Caco-2 (cell line): ENCODE measurements at regions of chr1 and their contacts with region 1.

Region 1: GRCh38 chr1:214349781-214350180 is 68.8 kb downstream of the SMYD2 start:
- DNase-seq: peak; percentile 82 to 88
- H3K4me3 ChIP-seq: no peak overlapping the region
- H3K4me3 Mint-ChIP-seq: peak overlapping the region; percentile 70
- H3K27ac Mint-ChIP-seq: peak overlapping the region; percentile 97
- H3K4me1 ChIP-seq: peaks cover 46% of the 10 kb centered on the region
- H3K4me1 Mint-ChIP-seq: peaks cover 33% of the 10 kb centered on the region
- H3K27me3 ChIP-seq: no peaks in the 10 kb centered on the region
- H3K27me3 Mint-ChIP-seq: no peaks in the 10 kb centered on the region
- CTCF ChIP-seq: no peak

Region 2: GRCh38 chr1:214364386-214364785 is 14.6 kb after region 1 on chr1:
- CTCF ChIA-PET with region 1: interaction called, 5 read pairs
- POLR2A ChIA-PET with region 1: interaction called, 4 read pairs
- intact Hi-C with region 1: loop called (anchors 1 kb)
- DNase-seq: peak in 1 of 2 experiments; percentile 56
- H3K4me3 ChIP-seq: no peak overlapping the region
- H3K4me3 Mint-ChIP-seq: peak overlapping the region; percentile 60
- H3K27ac Mint-ChIP-seq: peak overlapping the region; percentile 90
- H3K4me1 ChIP-seq: peaks cover 53% of the 10 kb centered on the region
- H3K4me1 Mint-ChIP-seq: peaks cover 64% of the 10 kb centered on the region
- H3K27me3 ChIP-seq: no peaks in the 10 kb centered on the region
- H3K27me3 Mint-ChIP-seq: no peaks in the 10 kb centered on the region
- CTCF ChIP-seq: no peak

Region 3: DNA sequence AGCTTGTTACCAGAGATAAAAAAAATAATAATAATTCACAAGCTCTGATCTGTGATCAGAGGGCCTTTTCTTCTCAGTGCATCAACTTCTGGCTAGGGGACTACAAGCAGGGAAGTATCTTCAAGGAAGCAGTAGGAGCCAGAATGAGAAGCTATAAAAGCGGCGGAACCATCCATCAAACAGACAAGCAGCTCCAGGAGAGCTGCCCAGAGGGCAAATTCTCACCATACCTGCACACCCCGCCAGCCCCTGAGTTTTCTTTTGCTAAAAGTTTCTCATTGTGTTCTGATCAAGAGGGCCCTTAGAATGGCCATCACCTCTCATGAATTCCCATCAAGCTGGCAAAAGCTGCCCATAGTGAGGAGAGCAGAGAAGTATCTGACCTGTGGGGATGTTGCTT is 30.6 kb after region 1 on chr1:
- CTCF ChIA-PET with region 1: interaction called, 6 read pairs
- POLR2A ChIA-PET with region 1: interaction called, 3 read pairs
- intact Hi-C with region 1: loop called (anchors 1 kb)
- DNase-seq: peak; percentile 69 to 82
- H3K4me3 ChIP-seq: no peak overlapping the region
- H3K4me3 Mint-ChIP-seq: peak overlapping the region; percentile 16
- H3K27ac Mint-ChIP-seq: peak overlapping the region; percentile 77
- H3K4me1 ChIP-seq: peaks cover 48% of the 10 kb centered on the region
- H3K4me1 Mint-ChIP-seq: peaks cover 40% of the 10 kb centered on the region
- H3K27me3 ChIP-seq: no peaks in the 10 kb centered on the region
- H3K27me3 Mint-ChIP-seq: no peaks in the 10 kb centered on the region
- CTCF ChIP-seq: no peak